B cell (primary cell): ENCODE measurements at regions of chr6 and their contacts with region 1.

Region 1: DNA sequence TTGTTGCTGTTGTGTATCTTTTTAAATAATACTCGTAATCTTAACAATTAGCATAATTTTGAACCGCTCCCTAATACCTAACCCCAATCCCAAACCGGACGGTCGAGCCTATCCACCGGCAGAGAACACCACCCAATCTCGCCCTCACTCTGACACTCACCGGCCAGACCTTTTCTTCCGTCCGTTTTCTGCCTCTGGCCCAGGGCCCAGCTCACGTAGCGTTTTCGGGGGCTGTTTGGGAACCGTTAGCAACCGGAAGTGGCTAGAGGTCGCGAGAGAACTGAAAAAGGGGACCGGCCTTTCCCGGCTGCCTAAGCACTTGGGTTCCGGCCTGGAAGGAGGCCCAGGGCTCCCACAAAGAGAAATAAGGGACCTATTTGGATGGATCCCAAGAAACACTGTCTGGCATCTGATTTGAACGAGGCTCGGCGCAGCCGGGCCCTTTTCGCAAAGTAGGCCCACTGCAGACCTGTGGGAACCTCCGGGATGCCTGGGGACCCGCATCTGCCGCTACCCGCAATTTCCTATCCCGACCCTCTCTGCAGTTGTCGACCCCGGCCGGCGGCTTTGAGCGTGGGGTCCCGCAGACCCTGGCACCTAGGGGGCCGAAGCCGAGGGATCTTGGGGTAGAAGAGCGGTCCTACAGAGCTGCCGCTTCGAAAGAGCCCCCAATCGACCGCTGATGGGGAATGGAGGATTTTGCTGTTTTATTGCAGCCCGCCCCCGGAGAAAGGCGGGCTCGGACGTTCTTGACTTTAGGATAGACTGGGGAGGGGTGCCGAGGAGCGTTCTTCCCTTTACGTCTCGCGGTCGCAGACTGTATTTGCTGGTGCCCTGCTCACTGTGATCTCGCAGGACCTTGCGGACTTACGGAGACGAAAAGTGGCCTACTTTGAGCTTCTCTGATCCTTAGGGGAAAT is 4.8 kb upstream of the ZKSCAN8 start:
- DNase-seq: peak; percentile 89
- ATAC-seq: peak; percentile 52
- H3K4me3 ChIP-seq: peak overlapping the region; percentile 89 to 99 (median 96)
- H3K4me3 Mint-ChIP-seq: peak overlapping the region; percentile 94
- H3K27ac ChIP-seq: peak overlapping the region; percentile 95 to 97
- H3K27ac Mint-ChIP-seq: peak overlapping the region; percentile 95
- H3K4me1 ChIP-seq: peaks cover 24 to 27% of the 10 kb centered on the region in 2 donors
- H3K4me1 Mint-ChIP-seq: peaks cover 60% of the 10 kb centered on the region
- H3K27me3 ChIP-seq: no peaks in the 10 kb centered on the region
- H3K27me3 Mint-ChIP-seq: no peaks in the 10 kb centered on the region
- CTCF ChIP-seq: no peak

Region 2: GRCh38 chr6:27902335-27903314 is 234.2 kb before region 1 on chr6:
- CTCF ChIA-PET with region 1: no interaction called
- POLR2A ChIA-PET with region 1: no interaction called
- intact Hi-C with region 1: loop called (anchors 5 kb)
- DNase-seq: peak; percentile 94
- ATAC-seq: peak; percentile 84
- H3K4me3 ChIP-seq: peak overlapping the region; percentile 56 to 91 (median 70)
- H3K4me3 Mint-ChIP-seq: peak overlapping the region; percentile 94
- H3K27ac ChIP-seq: peak overlapping the region; percentile 78 to 95
- H3K27ac Mint-ChIP-seq: peak overlapping the region; percentile 99
- H3K4me1 ChIP-seq: peaks cover 0 to 8% of the 10 kb centered on the region in 2 donors
- H3K4me1 Mint-ChIP-seq: peaks cover 7% of the 10 kb centered on the region
- H3K27me3 ChIP-seq: no peaks in the 10 kb centered on the region
- H3K27me3 Mint-ChIP-seq: peaks cover 7% of the 10 kb centered on the region
- CTCF ChIP-seq: no peak

Region 3: DNA sequence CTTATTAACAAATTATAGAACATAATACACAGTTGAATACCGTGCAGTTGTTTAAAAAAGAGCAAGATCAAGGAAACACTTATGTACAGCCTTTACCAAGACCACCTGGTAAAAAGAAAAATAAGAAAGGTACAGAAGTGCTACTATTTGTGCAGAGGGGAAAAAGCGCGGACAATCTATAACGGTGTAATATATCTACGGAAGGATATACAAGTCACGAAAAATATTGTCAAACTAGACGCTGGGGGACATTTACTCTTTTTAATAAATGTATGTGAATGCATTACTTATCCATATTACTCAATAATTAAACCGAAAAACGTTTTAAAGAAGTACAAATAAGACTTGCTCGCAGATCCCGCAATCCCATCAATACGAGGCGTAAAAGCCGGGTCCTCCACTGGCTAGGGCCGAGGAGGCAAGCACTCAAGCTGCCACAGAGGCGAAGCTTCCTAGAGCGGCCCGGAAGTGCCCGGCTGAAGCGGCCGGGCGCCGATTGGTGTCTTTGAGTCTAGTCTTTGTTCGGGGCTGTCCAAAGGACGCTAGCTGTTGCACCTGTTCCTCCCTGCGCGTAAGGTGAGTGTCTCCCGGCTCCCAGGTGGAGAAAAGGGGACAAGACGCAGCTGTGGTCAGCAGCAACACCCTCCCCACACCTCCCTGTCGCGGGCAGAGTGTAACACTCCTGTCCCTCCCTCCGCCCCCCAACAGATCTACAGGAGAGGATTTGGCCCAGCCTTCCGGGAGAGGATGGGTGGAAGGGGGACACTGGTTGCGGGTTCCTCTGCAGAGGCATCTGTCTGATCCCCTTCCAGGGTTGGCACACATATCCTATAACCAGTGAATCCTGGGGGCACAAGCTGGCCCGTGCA is 12.5 kb before region 1 on chr6 and contains the start of gene ZSCAN16:
- CTCF ChIA-PET with region 1: interaction called, 46 read pairs
- POLR2A ChIA-PET with region 1: interaction called, 18 read pairs
- intact Hi-C with region 1: loop called (anchors 1 kb)
- DNase-seq: peak; percentile 86
- ATAC-seq: peak; percentile 96
- H3K4me3 ChIP-seq: peak within 1 kb of the TSS; percentile 70 to 91 (median 75)
- H3K4me3 Mint-ChIP-seq: peak within 1 kb of the TSS; percentile 98
- H3K27ac ChIP-seq: peak within 1 kb of the TSS; percentile 68 to 74
- H3K27ac Mint-ChIP-seq: peak within 1 kb of the TSS; percentile 92
- H3K4me1 ChIP-seq: peaks cover 12 to 18% of the 10 kb centered on the region in 2 donors
- H3K4me1 Mint-ChIP-seq: peaks cover 31% of the 10 kb centered on the region
- H3K27me3 ChIP-seq: no peaks in the 10 kb centered on the region
- H3K27me3 Mint-ChIP-seq: no peaks in the 10 kb centered on the region
- CTCF ChIP-seq: no peak
- total RNA-seq, gene ZSCAN16: 15.4 and 15.8 TPM in 2 replicates

Region 4: DNA sequence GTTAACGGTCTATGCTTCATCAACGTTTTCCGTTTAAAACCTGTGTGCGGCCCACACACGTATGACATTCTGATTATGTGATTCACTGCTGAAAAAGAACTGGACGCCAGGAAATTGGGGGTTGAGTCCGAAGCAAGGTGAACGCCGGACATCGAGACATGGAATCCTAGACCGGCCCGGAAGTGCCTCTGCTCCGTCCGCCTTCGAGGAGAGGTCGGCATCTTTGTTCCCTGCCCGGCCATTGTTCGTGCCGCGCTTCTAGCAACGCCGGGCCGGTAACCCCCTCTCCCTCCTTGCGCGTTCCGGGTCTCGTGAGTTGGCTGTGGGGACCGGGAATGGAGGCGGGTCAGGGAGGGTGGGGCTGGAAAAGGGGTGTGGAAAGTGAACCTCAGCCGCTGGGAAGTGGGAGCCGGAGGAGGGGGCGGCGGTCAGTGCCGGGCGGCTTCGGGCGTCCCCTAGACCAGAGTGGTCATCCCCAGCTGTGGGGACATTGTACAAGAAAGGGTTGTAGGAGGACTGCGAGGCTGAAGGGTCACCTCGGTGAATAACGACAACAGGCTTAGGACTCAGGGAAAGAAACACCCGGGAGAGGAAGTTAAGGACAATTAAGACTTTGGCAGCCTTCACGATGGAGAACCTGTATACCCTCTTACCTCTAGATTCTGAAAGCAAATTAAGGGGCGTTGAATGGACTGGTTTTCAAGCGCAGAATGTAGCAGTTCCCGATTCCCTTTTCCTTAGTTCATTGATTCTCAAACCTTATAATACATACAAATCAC is 88.4 kb after region 1 on chr6 and contains the start of gene ZSCAN9:
- CTCF ChIA-PET with region 1: no interaction called
- POLR2A ChIA-PET with region 1: no interaction called
- intact Hi-C with region 1: loop called (anchors 1 kb)
- DNase-seq: peak; percentile 80
- ATAC-seq: peak; percentile 95
- H3K4me3 ChIP-seq: peak within 1 kb of the TSS; percentile 77 to 90 (median 89)
- H3K4me3 Mint-ChIP-seq: peak within 1 kb of the TSS; percentile 98
- H3K27ac ChIP-seq: peak within 1 kb of the TSS; percentile 25 to 75
- H3K27ac Mint-ChIP-seq: peak within 1 kb of the TSS; percentile 89
- H3K4me1 ChIP-seq: peaks cover 10 to 15% of the 10 kb centered on the region in 2 donors
- H3K4me1 Mint-ChIP-seq: peaks cover 22% of the 10 kb centered on the region
- H3K27me3 ChIP-seq: peaks cover 0 to 18% (median 7%) of the 10 kb centered on the region in 4 experiments
- H3K27me3 Mint-ChIP-seq: peaks cover 18% of the 10 kb centered on the region
- CTCF ChIP-seq: no peak
- total RNA-seq, gene ZSCAN9: 29.8 and 32.0 TPM in 2 replicates

Region 5: GRCh38 chr6:28335564-28336283 is 198.9 kb after region 1 on chr6 and contains the start of gene ZSCAN31:
- CTCF ChIA-PET with region 1: interaction called, 4 read pairs
- POLR2A ChIA-PET with region 1: no interaction called
- intact Hi-C with region 1: loop called (anchors 5 kb)
- DNase-seq: peak; percentile 89
- ATAC-seq: peak; percentile 87
- H3K4me3 ChIP-seq: peak within 1 kb of the TSS; percentile 72 to 98 (median 86)
- H3K4me3 Mint-ChIP-seq: no peak within 1 kb of the TSS
- H3K27ac ChIP-seq: peak within 1 kb of the TSS; percentile 95 to 96
- H3K27ac Mint-ChIP-seq: no peak within 1 kb of the TSS
- H3K4me1 ChIP-seq: peaks cover 11 to 18% of the 10 kb centered on the region in 2 donors
- H3K4me1 Mint-ChIP-seq: no peaks in the 10 kb centered on the region
- H3K27me3 ChIP-seq: no peaks in the 10 kb centered on the region
- H3K27me3 Mint-ChIP-seq: no peaks in the 10 kb centered on the region
- CTCF ChIP-seq: no peak
- total RNA-seq, gene ZSCAN31: 2.9 and 4.6 TPM in 2 replicates

Region 6: GRCh38 chr6:28383235-28384142 is 246.6 kb after region 1 on chr6:
- CTCF ChIA-PET with region 1: interaction called, 3 read pairs
- POLR2A ChIA-PET with region 1: interaction called, 3 read pairs
- intact Hi-C with region 1: loop called (anchors 1 kb)
- DNase-seq: peak; percentile 93
- ATAC-seq: peak; percentile 98
- H3K4me3 ChIP-seq: peak overlapping the region; percentile 45 to 64 (median 55)
- H3K4me3 Mint-ChIP-seq: peak overlapping the region; percentile 92
- H3K27ac ChIP-seq: peak overlapping the region; percentile 75 to 93
- H3K27ac Mint-ChIP-seq: peak overlapping the region; percentile 94
- H3K4me1 ChIP-seq: peaks cover 11 to 16% of the 10 kb centered on the region in 2 donors
- H3K4me1 Mint-ChIP-seq: peaks cover 19% of the 10 kb centered on the region
- H3K27me3 ChIP-seq: no peaks in the 10 kb centered on the region
- H3K27me3 Mint-ChIP-seq: no peaks in the 10 kb centered on the region
- CTCF ChIP-seq: peak; percentile 42